ENCODE measurements at regions of chr19 and their contacts with region 1.

Region 1: DNA sequence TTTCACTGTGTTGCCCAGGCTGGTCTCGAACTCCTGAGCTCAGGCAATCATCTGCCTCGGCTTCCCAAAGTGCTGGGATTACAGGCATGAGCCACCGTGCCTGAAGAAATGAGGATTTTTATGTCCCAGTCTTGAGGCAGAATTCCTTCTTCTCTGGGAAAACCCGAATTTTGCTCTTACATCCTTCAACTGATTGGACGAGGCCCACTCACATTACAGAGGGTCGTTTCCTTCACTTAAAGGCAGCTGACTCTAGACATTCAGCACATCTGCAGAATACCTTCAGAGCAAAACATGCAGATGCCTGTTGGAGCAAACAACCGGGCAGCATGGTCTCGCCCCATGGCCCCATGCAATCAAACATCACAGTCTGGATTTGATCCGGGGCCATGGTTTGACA is 36.3 kb upstream of the NFIC start:
- DNase-seq: no peak
- H3K4me3 ChIP-seq: no peak overlapping the region
- H3K27ac ChIP-seq: no peak overlapping the region
- H3K27me3 ChIP-seq: peaks cover 0 to 4% (median 0%) of the 10 kb centered on the region in 45 donors
- CTCF ChIP-seq: no peak

Region 2: GRCh38 chr19:3253270-3253669 is 76.8 kb before region 1 on chr19:
- intact Hi-C with region 1: no loop called
- DNase-seq: no peak
- H3K4me3 ChIP-seq: no peak overlapping the region
- H3K27ac ChIP-seq: no peak overlapping the region
- H3K27me3 ChIP-seq: no peaks in the 10 kb centered on the region
- CTCF ChIP-seq: no peak

Region 3: DNA sequence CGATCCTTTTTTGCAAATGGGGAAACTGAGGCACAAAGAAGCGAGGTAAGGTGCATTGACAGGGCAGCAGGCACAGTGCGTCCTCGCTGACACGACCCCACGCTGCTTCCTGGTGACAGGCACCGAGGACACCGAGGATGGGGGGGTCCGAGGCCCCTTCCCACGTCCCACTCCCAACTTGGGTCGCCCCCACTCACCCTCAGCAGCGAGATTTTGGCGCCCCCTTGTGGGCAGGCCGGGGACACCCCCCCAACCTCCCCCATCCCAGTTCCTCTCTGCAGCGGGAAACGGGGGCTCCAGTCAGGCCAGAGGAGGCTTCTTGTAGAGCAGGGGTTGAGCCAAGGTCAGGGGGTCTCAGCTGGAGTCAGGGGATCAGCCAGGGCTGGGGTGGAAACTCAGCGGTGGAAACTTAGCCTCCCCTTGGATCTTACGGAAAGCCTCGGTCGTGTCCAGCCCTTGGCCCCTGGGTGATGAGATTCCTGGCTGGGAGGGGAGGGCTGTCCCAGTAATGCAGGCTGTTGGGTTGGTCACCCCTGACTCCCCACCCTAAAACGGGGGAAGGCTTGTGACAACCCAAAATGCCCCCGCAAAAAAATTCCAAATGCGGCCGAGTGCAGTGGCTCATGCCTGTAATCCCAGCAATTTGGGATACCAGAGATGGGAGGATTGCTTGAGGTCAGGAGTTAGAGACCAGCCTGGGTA is 142.1 kb after region 1 on chr19:
- intact Hi-C with region 1: loop called (anchors 2 to 5 kb)
- DNase-seq: peak in 3 of 10 donors; percentile 23 to 57 (median 40)
- H3K4me3 ChIP-seq: peak overlapping the region in 3 of 59 donors; percentile 7 to 40 (median 17)
- H3K27ac ChIP-seq: no peak overlapping the region
- H3K27me3 ChIP-seq: no peaks in the 10 kb centered on the region
- CTCF ChIP-seq: peak; percentile 55 to 96 (median 88)

Measured in dorsolateral prefrontal cortex (tissue), 120 donors.